ENCODE measurements at regions of chr22 and their contacts with region 1.

Region 1: GRCh38 chr22:49698616-49699310 is 128.9 kb downstream of the BRD1 start:
- DNase-seq: peak in 1 of 2 donors; percentile 41
- H3K4me3 ChIP-seq: no peak overlapping the region
- H3K27ac ChIP-seq: no peak overlapping the region
- H3K4me1 ChIP-seq: no peaks in the 10 kb centered on the region
- H3K27me3 ChIP-seq: peaks cover 0 to 40% of the 10 kb centered on the region in 2 donors
- CTCF ChIP-seq: no peak
- POLR2A ChIP-seq: no peak

Region 2: DNA sequence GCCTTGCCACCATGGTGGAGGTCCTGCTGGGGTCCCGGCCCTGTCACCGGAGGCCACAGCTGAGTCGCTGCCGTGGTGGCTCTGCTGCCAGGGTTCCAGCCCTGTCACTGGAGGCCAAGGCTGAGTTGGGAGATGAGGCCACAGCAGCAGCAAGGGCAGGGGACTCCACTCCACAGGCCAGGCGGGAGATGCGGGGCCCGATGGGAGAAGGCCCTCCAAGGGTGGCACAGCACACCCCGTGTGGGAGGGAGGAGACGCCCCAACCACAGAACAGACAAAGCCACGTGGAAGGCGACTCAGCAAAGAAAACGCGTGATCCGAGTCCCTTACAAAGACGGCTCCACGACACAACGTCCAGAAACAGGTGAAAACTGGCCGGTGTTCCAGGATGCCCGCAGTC is 30.4 kb before region 1 on chr22:
- intact Hi-C with region 1: loop called (anchors 1 kb)
- DNase-seq: peak in 1 of 2 donors; percentile 43
- H3K4me3 ChIP-seq: no peak overlapping the region
- H3K27ac ChIP-seq: no peak overlapping the region
- H3K4me1 ChIP-seq: peaks cover 0 to 4% of the 10 kb centered on the region in 2 donors
- H3K27me3 ChIP-seq: peaks cover 2 to 71% of the 10 kb centered on the region in 2 donors
- CTCF ChIP-seq: no peak
- POLR2A ChIP-seq: no peak

Measured in breast epithelium (tissue), 4 donors.